Gastrocnemius medialis (tissue), 4 donors: ENCODE measurements at regions of chr11 and their contacts with region 1.

Region 1: GRCh38 chr11:117849781-117850414 is 25.4 kb upstream of the FXYD2 start:
- DNase-seq: no peak
- ATAC-seq: no peak
- H3K4me3 ChIP-seq: no peak overlapping the region
- H3K27ac ChIP-seq: peak overlapping the region in 1 of 4 donors; percentile 5
- H3K4me1 ChIP-seq: peaks cover 0 to 6% of the 10 kb centered on the region in 2 donors
- H3K27me3 ChIP-seq: no peaks in the 10 kb centered on the region
- CTCF ChIP-seq: no peak
- POLR2A ChIP-seq: no peak

Region 2: DNA sequence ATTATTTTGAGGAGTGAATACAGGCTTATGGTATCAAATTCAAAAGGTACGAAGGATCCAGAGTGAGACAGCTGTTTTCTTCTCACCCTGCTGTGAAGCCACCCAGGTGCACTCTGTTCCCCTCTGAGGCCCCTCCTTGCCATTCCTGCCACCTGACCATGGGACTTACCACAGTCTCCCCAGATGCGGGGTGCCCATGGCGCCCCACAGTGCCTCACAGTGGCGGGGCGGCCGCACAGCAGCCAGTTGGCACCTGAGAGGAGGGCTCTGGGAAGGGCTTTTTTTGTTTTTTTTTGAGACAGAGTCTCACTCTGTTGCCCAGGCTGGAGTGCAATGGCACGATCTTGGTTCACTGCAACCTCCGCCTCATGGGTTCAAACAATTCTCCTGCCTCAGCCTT is 370.5 kb before region 1 on chr11:
- in situ Hi-C with region 1: no loop called
- intact Hi-C with region 1: no loop called
- DNase-seq: no peak
- ATAC-seq: no peak
- H3K4me3 ChIP-seq: no peak overlapping the region
- H3K27ac ChIP-seq: no peak overlapping the region
- H3K4me1 ChIP-seq: no peaks in the 10 kb centered on the region
- H3K27me3 ChIP-seq: no peaks in the 10 kb centered on the region
- CTCF ChIP-seq: no peak
- POLR2A ChIP-seq: no peak

Region 3: DNA sequence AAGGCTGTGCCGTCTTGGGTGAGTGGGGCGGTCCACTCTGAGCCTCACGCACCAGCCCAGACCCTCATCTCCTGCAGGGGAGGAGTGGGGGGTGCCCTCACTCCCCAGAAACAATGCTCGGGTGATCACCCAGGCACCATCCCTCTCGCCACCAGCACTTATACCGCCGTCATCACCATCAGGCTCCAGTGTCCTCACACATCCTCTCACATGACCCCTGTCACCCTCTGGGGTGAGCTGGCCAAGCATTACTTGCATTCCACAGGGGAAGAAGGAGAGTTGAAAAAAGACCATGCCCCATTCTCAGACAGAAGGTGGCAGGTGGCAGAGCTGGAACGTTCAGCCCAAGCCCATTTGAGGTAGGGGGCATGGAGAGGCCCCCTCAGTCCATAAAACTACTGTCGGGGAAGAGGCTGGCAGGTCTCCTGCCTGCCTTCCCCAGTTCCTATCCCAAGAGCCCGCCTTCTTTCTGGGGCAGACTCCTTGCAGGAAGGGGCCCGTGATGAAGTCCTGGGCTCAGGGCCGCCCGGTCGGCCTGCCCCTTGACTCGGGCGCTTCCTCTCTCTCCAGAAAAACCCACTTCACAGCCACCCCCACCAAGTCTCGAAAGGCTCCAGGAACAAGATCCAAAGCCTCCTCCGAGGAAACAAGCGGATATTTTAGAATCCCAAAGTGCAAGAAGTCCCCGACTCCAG is 206.1 kb before region 1 on chr11:
- in situ Hi-C with region 1: no loop called
- intact Hi-C with region 1: no loop called
- DNase-seq: no peak
- ATAC-seq: no peak
- H3K4me3 ChIP-seq: no peak overlapping the region
- H3K27ac ChIP-seq: no peak overlapping the region
- H3K4me1 ChIP-seq: no peaks in the 10 kb centered on the region
- H3K27me3 ChIP-seq: peaks cover 0 to 11% (median 5%) of the 10 kb centered on the region in 3 donors
- CTCF ChIP-seq: no peak
- POLR2A ChIP-seq: no peak

Region 4: DNA sequence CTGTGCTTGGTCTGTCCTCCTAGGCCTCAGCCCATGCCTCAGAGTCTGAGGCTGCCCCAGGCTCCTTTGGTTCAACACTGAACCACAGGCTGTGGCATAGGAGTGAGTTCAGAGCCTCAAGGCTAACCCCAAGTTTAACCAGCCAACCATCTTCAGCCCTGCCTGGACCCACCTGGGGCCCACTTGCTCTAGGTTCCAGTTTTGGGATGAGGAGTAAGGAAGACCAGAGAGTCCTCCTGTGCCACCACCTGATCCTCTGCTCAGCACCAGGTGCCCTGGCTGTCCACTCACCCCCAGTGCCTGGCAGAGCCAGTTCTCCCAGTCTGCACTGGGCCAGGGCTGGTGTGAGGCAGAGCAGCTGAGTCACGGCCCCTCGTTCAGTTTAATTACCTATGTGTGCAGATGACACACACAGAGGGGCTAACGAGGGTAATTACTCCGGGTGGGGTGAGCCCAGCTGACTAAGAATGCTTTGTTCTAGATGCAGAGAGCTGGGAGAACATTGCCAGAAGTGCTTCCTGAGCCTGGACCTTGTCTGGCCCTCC is 91.3 kb after region 1 on chr11:
- in situ Hi-C with region 1: loop called in 1 of 4 experiments (anchors 5 kb)
- intact Hi-C with region 1: no loop called
- DNase-seq: no peak
- ATAC-seq: no peak
- H3K4me3 ChIP-seq: no peak overlapping the region
- H3K27ac ChIP-seq: no peak overlapping the region
- H3K4me1 ChIP-seq: no peaks in the 10 kb centered on the region
- H3K27me3 ChIP-seq: no peaks in the 10 kb centered on the region
- CTCF ChIP-seq: no peak
- POLR2A ChIP-seq: no peak